Ascending aorta (tissue), 2 donors: ENCODE measurements at regions of chr16 and their contacts with region 1.

Region 1: GRCh38 chr16:55842369-55843104 is 9.6 kb upstream of the CES1 start:
- DNase-seq: no peak
- H3K4me3 ChIP-seq: no peak overlapping the region
- H3K27ac ChIP-seq: no peak overlapping the region
- H3K4me1 ChIP-seq: no peaks in the 10 kb centered on the region
- H3K27me3 ChIP-seq: no peaks in the 10 kb centered on the region
- CTCF ChIP-seq: peak; percentile 59 to 78 (median 76)

Region 2: GRCh38 chr16:55711959-55712876 is 130.3 kb before region 1 on chr16:
- intact Hi-C with region 1: loop called (anchors 1 kb)
- DNase-seq: no peak
- H3K4me3 ChIP-seq: no peak overlapping the region
- H3K27ac ChIP-seq: no peak overlapping the region
- H3K4me1 ChIP-seq: no peaks in the 10 kb centered on the region
- H3K27me3 ChIP-seq: no peaks in the 10 kb centered on the region
- CTCF ChIP-seq: peak; percentile 51 to 67 (median 57)

Region 3: DNA sequence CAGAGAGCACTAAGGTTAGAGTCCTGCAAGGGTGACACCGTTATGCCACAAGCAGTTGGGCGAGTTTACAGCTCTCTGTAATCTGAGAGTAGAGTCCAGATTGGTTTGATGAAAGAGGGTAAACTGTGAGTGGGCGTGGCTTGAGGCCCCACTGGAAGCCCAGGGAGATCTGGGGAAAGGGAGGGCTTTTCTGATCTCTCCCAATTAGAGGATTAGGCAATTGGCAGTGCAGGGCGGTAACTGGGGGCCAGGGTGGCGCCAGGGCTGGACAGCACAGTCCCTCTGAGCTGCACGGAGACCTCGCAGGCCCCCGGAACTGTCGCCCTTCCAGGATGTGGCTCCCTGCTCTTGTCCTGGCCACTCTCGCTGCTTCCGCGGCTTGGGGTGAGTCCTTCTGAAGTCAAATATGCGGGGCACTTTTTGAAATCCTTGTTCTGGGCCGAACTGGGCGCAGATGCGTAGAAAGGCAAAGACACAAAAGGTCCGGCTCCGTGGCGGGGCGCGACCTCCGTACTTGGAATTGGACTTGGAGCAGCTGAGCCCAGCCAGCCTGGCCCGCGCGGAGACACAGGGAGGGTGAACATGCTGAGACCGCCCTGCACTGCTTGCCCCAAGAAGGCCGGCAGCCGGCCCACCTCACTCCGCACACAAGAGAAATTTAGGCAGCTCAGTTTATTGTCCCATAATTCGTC is 82.1 kb before region 1 on chr16:
- intact Hi-C with region 1: no loop called
- DNase-seq: no peak
- H3K4me3 ChIP-seq: no peak overlapping the region
- H3K27ac ChIP-seq: no peak overlapping the region
- H3K4me1 ChIP-seq: no peaks in the 10 kb centered on the region
- H3K27me3 ChIP-seq: no peaks in the 10 kb centered on the region
- CTCF ChIP-seq: no peak

Region 4: GRCh38 chr16:55832425-55832757 is 10.1 kb before region 1 on chr16:
- intact Hi-C with region 1: no loop called
- DNase-seq: no peak
- H3K4me3 ChIP-seq: peak overlapping the region in 1 of 2 donors; percentile 56
- H3K27ac ChIP-seq: peak overlapping the region in 1 of 2 donors; percentile 69
- H3K4me1 ChIP-seq: no peaks in the 10 kb centered on the region
- H3K27me3 ChIP-seq: no peaks in the 10 kb centered on the region
- CTCF ChIP-seq: no peak